ENCODE measurements at regions of chr4 and their contacts with region 1.

Region 1: GRCh38 chr4:2468445-2469192 is at the start of gene RNF4:
- DNase-seq: peak; percentile 97
- H3K4me3 Mint-ChIP-seq: peak within 1 kb of the TSS; percentile 93
- H3K27ac Mint-ChIP-seq: peak within 1 kb of the TSS; percentile 94
- H3K4me1 Mint-ChIP-seq: peaks cover 14% of the 10 kb centered on the region
- H3K27me3 Mint-ChIP-seq: no peaks in the 10 kb centered on the region
- CTCF ChIP-seq: no peak
- total RNA-seq, gene RNF4: 81.4 and 89.7 TPM in 2 replicates

Region 2: GRCh38 chr4:2241410-2242353 is 226.9 kb before region 1 on chr4 and contains the starts of genes HAUS3 and POLN:
- CTCF ChIA-PET with region 1: no interaction called
- POLR2A ChIA-PET with region 1: interaction called, 37 read pairs
- intact Hi-C with region 1: loop called (anchors 5 kb)
- DNase-seq: peak; percentile 98
- H3K4me3 Mint-ChIP-seq: peak within 1 kb of the TSS; percentile 80
- H3K27ac Mint-ChIP-seq: peak within 1 kb of the TSS; percentile 90
- H3K4me1 Mint-ChIP-seq: peaks cover 43% of the 10 kb centered on the region
- H3K27me3 Mint-ChIP-seq: no peaks in the 10 kb centered on the region
- CTCF ChIP-seq: no peak
- total RNA-seq, gene HAUS3: 13.3 and 13.9 TPM in 2 replicates
- total RNA-seq, gene POLN: 2.8 and 3.1 TPM in 2 replicates

Region 3: DNA sequence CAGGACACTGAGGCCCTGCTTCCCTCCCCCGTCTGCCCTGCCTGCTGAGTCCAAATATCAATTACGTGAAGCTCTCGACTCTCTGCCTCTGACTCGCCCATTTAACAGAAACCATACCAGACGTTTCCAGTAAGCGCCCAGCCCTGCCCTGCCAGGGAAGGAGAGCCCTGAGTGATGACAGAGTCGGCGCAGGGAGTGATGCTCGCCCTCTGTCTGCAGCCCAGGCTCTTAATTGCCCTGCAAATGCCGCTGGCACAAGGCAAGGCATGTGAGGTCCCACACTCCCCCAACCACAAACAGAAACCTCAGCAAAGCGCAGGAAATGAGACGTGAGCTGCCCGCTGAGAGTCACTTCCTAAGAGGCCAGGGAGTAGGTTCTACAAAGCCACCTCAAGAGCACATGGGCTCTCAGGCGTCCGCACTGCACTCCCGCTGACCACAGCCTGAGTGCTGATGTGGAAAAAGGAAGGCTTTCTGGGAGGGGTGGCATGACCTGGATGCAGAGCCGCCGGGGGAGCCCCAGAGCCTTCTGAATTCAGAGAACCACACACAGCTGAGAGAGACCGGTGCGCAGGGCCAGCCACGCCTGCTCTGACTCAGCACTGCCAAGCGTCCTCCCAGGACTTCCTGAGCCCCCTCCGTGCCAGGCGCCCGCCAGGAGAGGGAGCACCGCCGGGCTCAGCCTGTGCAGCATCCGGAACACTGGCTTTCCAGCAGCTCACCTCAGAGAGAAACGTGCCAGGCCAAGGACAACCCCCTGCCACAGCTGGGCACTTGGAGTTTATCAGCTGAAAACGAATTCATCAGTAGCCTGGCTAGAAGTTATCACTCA is 55.5 kb before region 1 on chr4:
- CTCF ChIA-PET with region 1: interaction called, 3 read pairs
- POLR2A ChIA-PET with region 1: interaction called, 11 read pairs
- intact Hi-C with region 1: loop called (anchors 2 kb)
- DNase-seq: peak; percentile 94
- H3K4me3 Mint-ChIP-seq: peak overlapping the region; percentile 71
- H3K27ac Mint-ChIP-seq: peak overlapping the region; percentile 90
- H3K4me1 Mint-ChIP-seq: peaks cover 10% of the 10 kb centered on the region
- H3K27me3 Mint-ChIP-seq: peaks cover 11% of the 10 kb centered on the region
- CTCF ChIP-seq: peak; percentile 52

Region 4: GRCh38 chr4:2432991-2433698 is 35.5 kb before region 1 on chr4:
- CTCF ChIA-PET with region 1: no interaction called
- POLR2A ChIA-PET with region 1: no interaction called
- intact Hi-C with region 1: no loop called
- DNase-seq: peak; percentile 44
- H3K4me3 Mint-ChIP-seq: no peak overlapping the region
- H3K27ac Mint-ChIP-seq: no peak overlapping the region
- H3K4me1 Mint-ChIP-seq: no peaks in the 10 kb centered on the region
- H3K27me3 Mint-ChIP-seq: peaks cover 15% of the 10 kb centered on the region
- CTCF ChIP-seq: no peak

Region 5: GRCh38 chr4:2484993-2485392 is 16.4 kb after region 1 on chr4:
- CTCF ChIA-PET with region 1: interaction called, 3 read pairs
- POLR2A ChIA-PET with region 1: interaction called, 20 read pairs
- intact Hi-C with region 1: no loop called
- DNase-seq: no peak
- H3K4me3 Mint-ChIP-seq: no peak overlapping the region
- H3K27ac Mint-ChIP-seq: peak overlapping the region; percentile 22
- H3K4me1 Mint-ChIP-seq: peaks cover 43% of the 10 kb centered on the region
- H3K27me3 Mint-ChIP-seq: no peaks in the 10 kb centered on the region
- CTCF ChIP-seq: no peak

Region 6: DNA sequence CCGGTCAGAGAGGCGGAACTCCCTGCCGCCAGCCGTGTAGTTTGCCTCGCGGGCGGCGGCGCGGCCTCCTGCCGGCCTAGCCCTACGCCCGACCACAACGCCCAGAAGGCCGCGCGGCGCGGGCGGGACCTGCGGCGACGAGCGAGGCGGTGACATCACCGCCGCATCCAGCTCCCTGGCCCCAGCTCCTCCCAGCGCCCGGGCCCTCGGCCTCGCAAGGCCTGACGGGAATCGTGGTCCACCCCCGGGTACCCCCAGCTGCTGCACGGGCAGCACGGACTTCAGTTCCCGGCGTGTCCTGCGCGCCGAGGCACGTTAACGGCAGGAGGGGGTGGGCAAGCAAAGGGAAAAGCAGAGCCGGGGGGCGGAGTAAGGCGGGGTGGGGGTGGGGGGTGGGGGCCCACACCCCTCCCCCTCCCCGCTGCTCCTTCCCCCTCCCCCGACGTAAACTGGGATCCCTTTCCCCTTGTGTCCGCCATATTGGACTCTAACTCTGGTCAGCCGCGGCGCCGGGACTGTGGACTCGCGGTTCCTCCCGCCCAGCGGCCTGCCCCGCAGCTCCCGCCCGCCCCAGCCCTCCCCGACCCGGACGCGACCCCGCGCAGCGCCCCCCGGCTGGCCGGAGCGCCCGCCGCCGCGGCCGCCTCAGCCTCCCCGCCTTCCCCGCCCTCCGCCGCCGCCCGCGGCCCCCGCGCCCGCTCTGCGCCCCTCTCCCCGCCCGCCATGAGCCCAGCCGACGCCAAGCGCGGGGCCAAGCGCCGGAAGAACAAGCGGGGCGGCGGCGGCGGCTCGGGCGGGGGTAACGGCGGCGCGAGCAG is 67.8 kb after region 1 on chr4 and contains the start of gene FAM193A:
- CTCF ChIA-PET with region 1: interaction called, 3 read pairs
- POLR2A ChIA-PET with region 1: interaction called, 17 read pairs
- intact Hi-C with region 1: no loop called
- DNase-seq: peak; percentile 99
- H3K4me3 Mint-ChIP-seq: peak within 1 kb of the TSS; percentile 81
- H3K27ac Mint-ChIP-seq: peak within 1 kb of the TSS; percentile 81
- H3K4me1 Mint-ChIP-seq: no peaks in the 10 kb centered on the region
- H3K27me3 Mint-ChIP-seq: no peaks in the 10 kb centered on the region
- CTCF ChIP-seq: no peak
- total RNA-seq, gene FAM193A: 30.7 and 31.3 TPM in 2 replicates

Region 7: DNA sequence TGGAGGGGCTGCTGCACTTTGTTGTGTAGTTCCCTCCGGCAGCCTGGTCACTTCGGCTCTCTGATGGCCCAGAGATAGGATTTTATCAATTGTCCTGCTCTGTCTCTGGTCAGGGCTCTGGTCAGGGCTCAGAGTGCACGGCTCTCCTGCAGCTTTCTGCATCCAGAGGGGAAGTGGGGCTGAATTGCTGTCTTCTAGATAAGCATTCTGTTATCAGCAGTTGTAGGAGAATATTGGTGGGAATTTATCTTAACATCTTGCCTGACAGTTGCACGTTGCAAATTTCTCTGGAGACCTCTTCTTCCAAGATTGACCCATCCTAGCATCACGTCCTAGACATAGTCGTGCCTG is 130.7 kb after region 1 on chr4:
- CTCF ChIA-PET with region 1: no interaction called
- POLR2A ChIA-PET with region 1: no interaction called
- intact Hi-C with region 1: no loop called
- DNase-seq: no peak
- H3K4me3 Mint-ChIP-seq: no peak overlapping the region
- H3K27ac Mint-ChIP-seq: no peak overlapping the region
- H3K4me1 Mint-ChIP-seq: peaks cover 23% of the 10 kb centered on the region
- H3K27me3 Mint-ChIP-seq: no peaks in the 10 kb centered on the region
- CTCF ChIP-seq: no peak

Region 8: GRCh38 chr4:3207531-3208037 is 739.0 kb after region 1 on chr4:
- CTCF ChIA-PET with region 1: no interaction called
- POLR2A ChIA-PET with region 1: no interaction called
- intact Hi-C with region 1: no loop called
- DNase-seq: peak; percentile 32
- H3K4me3 Mint-ChIP-seq: no peak overlapping the region
- H3K27ac Mint-ChIP-seq: no peak overlapping the region
- H3K4me1 Mint-ChIP-seq: no peaks in the 10 kb centered on the region
- H3K27me3 Mint-ChIP-seq: no peaks in the 10 kb centered on the region
- CTCF ChIP-seq: no peak

Measured in MCF 10A (cell line).